ENCODE measurements at regions of chr4 and their contacts with region 1.

Region 1: GRCh38 chr4:16001484-16001858 is 38.5 kb upstream of the FGFBP2 start:
- DNase-seq: peak; percentile 34
- H3K4me3 Mint-ChIP-seq: no peak overlapping the region
- H3K27ac Mint-ChIP-seq: no peak overlapping the region
- H3K4me1 Mint-ChIP-seq: no peaks in the 10 kb centered on the region
- H3K27me3 Mint-ChIP-seq: peaks cover 7% of the 10 kb centered on the region

Region 2: DNA sequence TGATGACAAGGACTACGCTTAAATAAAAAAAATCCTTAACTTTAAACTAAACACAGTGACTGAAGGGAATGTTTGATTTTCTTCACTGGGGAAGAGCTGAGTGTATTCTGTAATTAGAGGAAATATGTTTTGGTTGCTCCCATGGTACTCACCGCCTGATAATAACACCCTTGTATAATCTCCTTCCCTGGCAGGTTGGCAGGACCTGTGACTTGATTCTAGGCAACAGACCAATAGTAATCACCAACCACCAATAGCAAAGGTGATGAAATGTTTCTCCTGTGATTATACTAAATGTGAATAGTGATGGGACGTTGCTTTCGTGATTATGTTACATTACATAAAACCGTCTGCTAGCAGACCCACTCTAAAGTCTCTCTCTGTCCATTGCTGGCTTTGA is 1536.0 kb before region 1 on chr4:
- intact Hi-C with region 1: no loop called
- DNase-seq: no peak
- H3K4me3 Mint-ChIP-seq: no peak overlapping the region
- H3K27ac Mint-ChIP-seq: no peak overlapping the region
- H3K4me1 Mint-ChIP-seq: no peaks in the 10 kb centered on the region
- H3K27me3 Mint-ChIP-seq: no peaks in the 10 kb centered on the region

Region 3: DNA sequence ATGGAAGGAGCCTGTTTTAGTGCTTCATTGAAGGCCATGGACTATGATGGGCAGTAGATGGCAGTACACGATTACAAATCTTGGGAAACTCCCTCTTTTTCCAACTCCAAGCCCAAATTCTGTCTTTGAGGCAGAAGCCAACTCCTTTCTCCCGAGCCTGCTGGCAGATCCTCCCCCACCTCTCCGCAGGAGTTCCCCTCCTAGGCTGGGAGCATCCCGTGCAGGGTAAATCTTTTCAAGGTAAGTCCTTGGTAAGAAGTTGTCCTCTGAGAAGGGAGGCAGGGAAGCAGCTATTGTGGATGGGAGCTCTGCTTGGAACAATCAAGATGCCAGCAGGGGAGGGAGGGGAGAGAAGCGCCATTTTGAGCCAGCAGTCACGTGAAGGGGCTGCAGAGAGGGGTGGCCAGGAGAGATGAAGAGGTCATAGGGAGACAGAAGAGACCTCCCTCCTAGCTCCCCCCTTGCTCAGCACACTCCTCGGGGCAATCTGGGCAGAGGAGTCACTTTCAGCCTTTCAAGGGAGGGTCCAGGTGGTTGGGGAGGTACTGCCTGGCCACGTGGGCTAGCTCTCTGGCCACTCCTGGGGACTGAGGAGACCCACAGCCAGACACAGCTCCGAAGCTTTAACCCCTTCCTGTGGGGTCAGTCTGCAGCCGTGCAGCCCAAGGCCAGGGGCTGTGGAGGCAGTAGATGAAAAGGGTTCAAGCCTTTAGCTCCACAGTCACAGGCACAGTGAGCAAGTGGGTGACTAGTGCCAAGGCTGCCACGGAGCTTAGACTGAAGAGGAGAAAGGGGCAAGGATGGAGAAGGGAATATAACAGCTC is 522.2 kb before region 1 on chr4:
- intact Hi-C with region 1: loop called (anchors 10 kb)
- DNase-seq: no peak
- H3K4me3 Mint-ChIP-seq: no peak overlapping the region
- H3K27ac Mint-ChIP-seq: no peak overlapping the region
- H3K4me1 Mint-ChIP-seq: no peaks in the 10 kb centered on the region
- H3K27me3 Mint-ChIP-seq: no peaks in the 10 kb centered on the region

Region 4: GRCh38 chr4:15805583-15806517 is 195.6 kb before region 1 on chr4:
- intact Hi-C with region 1: loop called (anchors 1 kb)
- DNase-seq: no peak
- H3K4me3 Mint-ChIP-seq: no peak overlapping the region
- H3K27ac Mint-ChIP-seq: peak overlapping the region; percentile 1
- H3K4me1 Mint-ChIP-seq: peaks cover 66% of the 10 kb centered on the region
- H3K27me3 Mint-ChIP-seq: no peaks in the 10 kb centered on the region

Region 5: GRCh38 chr4:15882675-15883086 is 118.8 kb before region 1 on chr4:
- intact Hi-C with region 1: loop called (anchors 1 kb)
- DNase-seq: peak; percentile 30
- H3K4me3 Mint-ChIP-seq: no peak overlapping the region
- H3K27ac Mint-ChIP-seq: no peak overlapping the region
- H3K4me1 Mint-ChIP-seq: peaks cover 1% of the 10 kb centered on the region
- H3K27me3 Mint-ChIP-seq: peaks cover 26% of the 10 kb centered on the region

Region 6: GRCh38 chr4:15963001-15963451 is 38.4 kb before region 1 on chr4 and contains the start of gene FGFBP2:
- intact Hi-C with region 1: loop called (anchors 1 kb)
- DNase-seq: peak; percentile 41
- H3K4me3 Mint-ChIP-seq: no peak within 1 kb of the TSS
- H3K27ac Mint-ChIP-seq: no peak within 1 kb of the TSS
- H3K4me1 Mint-ChIP-seq: peaks cover 15% of the 10 kb centered on the region
- H3K27me3 Mint-ChIP-seq: peaks cover 20% of the 10 kb centered on the region
- total RNA-seq, gene FGFBP2: 2.4 and 3.9 TPM in 2 replicates